ENCODE measurements at regions of chr20 and their contacts with region 1.

Region 1: GRCh38 chr20:34302723-34303528 is at the start of gene AHCY:
- DNase-seq: peak; percentile 100
- H3K4me3 ChIP-seq: peak within 1 kb of the TSS; percentile 73
- H3K4me3 Mint-ChIP-seq: no peak within 1 kb of the TSS
- H3K27ac Mint-ChIP-seq: peak within 1 kb of the TSS; percentile 90
- H3K4me1 ChIP-seq: peaks cover 46% of the 10 kb centered on the region
- H3K4me1 Mint-ChIP-seq: peaks cover 15% of the 10 kb centered on the region
- H3K27me3 ChIP-seq: no peaks in the 10 kb centered on the region
- H3K27me3 Mint-ChIP-seq: no peaks in the 10 kb centered on the region
- CTCF ChIP-seq: no peak
- total RNA-seq, gene AHCY: 665 and 691 TPM in 2 replicates

Region 2: DNA sequence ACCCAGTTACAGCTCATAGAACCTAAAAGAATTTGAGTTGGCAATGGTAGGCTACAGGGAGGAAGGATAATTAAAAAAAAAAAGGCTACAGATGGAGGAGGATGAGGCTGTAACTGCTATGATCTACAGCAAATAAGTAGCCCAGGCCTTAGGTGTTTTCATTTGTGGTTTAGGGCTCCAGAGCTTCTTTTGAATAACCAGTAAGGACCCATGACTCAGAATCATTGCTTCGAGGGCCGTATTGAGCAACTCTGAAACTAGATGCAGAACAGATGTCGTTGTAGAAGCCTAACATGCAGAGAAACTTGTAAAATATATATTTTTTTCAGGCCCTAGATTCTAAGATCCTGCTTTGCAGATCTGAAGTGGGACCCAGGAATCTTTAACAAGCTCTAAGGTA is 80.7 kb before region 1 on chr20:
- CTCF ChIA-PET with region 1: no interaction called
- POLR2A ChIA-PET with region 1: no interaction called
- intact Hi-C with region 1: no loop called
- DNase-seq: no peak
- H3K4me3 ChIP-seq: no peak overlapping the region
- H3K4me3 Mint-ChIP-seq: no peak overlapping the region
- H3K27ac Mint-ChIP-seq: no peak overlapping the region
- H3K4me1 ChIP-seq: no peaks in the 10 kb centered on the region
- H3K4me1 Mint-ChIP-seq: no peaks in the 10 kb centered on the region
- H3K27me3 ChIP-seq: no peaks in the 10 kb centered on the region; the same call in 1 of the 2 replicates
- H3K27me3 Mint-ChIP-seq: peaks cover 8% of the 10 kb centered on the region
- CTCF ChIP-seq: no peak

Region 3: GRCh38 chr20:34420146-34420545 is 117.2 kb after region 1 on chr20:
- CTCF ChIA-PET with region 1: interaction called, 3 read pairs
- POLR2A ChIA-PET with region 1: no interaction called
- intact Hi-C with region 1: loop called (anchors 2 kb)
- DNase-seq: no peak
- H3K4me3 ChIP-seq: no peak overlapping the region
- H3K4me3 Mint-ChIP-seq: no peak overlapping the region
- H3K27ac Mint-ChIP-seq: peak overlapping the region; percentile 2
- H3K4me1 ChIP-seq: peaks cover 21% of the 10 kb centered on the region
- H3K4me1 Mint-ChIP-seq: peaks cover 32% of the 10 kb centered on the region
- H3K27me3 ChIP-seq: no peaks in the 10 kb centered on the region
- H3K27me3 Mint-ChIP-seq: no peaks in the 10 kb centered on the region
- CTCF ChIP-seq: no peak

Region 4: GRCh38 chr20:34516247-34517113 is 213.6 kb after region 1 on chr20 and contains the start of gene DYNLRB1:
- CTCF ChIA-PET with region 1: no interaction called
- POLR2A ChIA-PET with region 1: interaction called, 18 read pairs
- intact Hi-C with region 1: loop called (anchors 1 kb)
- DNase-seq: peak; percentile 100
- H3K4me3 ChIP-seq: peak within 1 kb of the TSS; percentile 52
- H3K4me3 Mint-ChIP-seq: peak within 1 kb of the TSS; percentile 85
- H3K27ac Mint-ChIP-seq: peak within 1 kb of the TSS; percentile 91
- H3K4me1 ChIP-seq: peaks cover 6% of the 10 kb centered on the region
- H3K4me1 Mint-ChIP-seq: peaks cover 19% of the 10 kb centered on the region
- H3K27me3 ChIP-seq: no peaks in the 10 kb centered on the region
- H3K27me3 Mint-ChIP-seq: no peaks in the 10 kb centered on the region
- CTCF ChIP-seq: no peak
- total RNA-seq, gene DYNLRB1: 357 and 359 TPM in 2 replicates